ENCODE measurements at regions of chr15 and their contacts with region 1.

Region 1: GRCh38 chr15:51585986-51586385 is 36.6 kb downstream of the DMXL2 start:
- H3K4me3 Mint-ChIP-seq: peak overlapping the region; percentile 58
- H3K27ac Mint-ChIP-seq: peak overlapping the region; percentile 99
- H3K4me1 Mint-ChIP-seq: peaks cover 39% of the 10 kb centered on the region
- H3K27me3 Mint-ChIP-seq: no peaks in the 10 kb centered on the region

Region 2: DNA sequence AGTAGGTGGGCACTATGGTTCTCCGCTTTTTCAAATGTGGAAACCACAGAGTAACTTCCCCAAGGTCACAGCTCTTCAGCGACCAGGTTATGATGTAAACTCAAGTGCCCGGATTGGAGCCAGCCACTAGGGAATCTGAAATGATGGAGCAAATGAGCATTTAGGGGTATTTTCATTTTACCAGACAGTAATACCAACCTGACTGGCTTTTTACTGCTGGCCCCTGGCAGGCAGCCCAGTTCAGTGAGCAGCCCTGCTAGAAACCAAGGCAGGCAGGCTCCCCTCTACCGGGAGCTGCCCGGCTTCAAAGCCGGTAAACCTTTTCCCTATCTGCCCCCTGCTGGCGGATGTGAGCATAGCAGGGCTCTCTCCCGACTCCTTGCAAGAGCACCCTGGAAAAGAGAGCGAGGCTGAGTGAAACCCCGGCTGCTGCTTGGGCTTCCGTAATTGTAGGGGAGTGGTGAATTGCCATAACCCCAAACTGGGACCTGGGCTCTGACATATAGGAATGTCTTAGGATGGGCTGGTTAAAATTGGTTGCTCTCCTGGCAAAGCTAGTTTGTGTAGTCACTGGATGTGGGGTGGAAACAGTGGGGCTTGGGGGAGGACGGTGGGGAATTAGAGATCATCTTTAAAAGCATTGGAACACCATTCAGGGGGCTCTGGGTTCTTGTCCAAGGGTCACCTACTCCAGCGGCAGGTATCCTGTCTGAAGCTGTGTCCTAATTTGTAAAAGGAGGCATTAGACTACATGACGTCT is 393.3 kb before region 1 on chr15:
- intact Hi-C with region 1: no loop called
- H3K4me3 Mint-ChIP-seq: no peak overlapping the region
- H3K27ac Mint-ChIP-seq: no peak overlapping the region
- H3K4me1 Mint-ChIP-seq: peaks cover 46% of the 10 kb centered on the region
- H3K27me3 Mint-ChIP-seq: peaks cover 28% of the 10 kb centered on the region

Region 3: GRCh38 chr15:51536965-51537574 is 48.9 kb before region 1 on chr15:
- intact Hi-C with region 1: no loop called
- H3K4me3 Mint-ChIP-seq: no peak overlapping the region
- H3K27ac Mint-ChIP-seq: no peak overlapping the region
- H3K4me1 Mint-ChIP-seq: no peaks in the 10 kb centered on the region
- H3K27me3 Mint-ChIP-seq: no peaks in the 10 kb centered on the region

Region 4: GRCh38 chr15:51622604-51623370 is 36.8 kb after region 1 on chr15 and contains the start of gene DMXL2:
- intact Hi-C with region 1: loop called (anchors 2 kb)
- H3K4me3 Mint-ChIP-seq: peak within 1 kb of the TSS; percentile 99
- H3K27ac Mint-ChIP-seq: peak within 1 kb of the TSS; percentile 100
- H3K4me1 Mint-ChIP-seq: peaks cover 55% of the 10 kb centered on the region
- H3K27me3 Mint-ChIP-seq: no peaks in the 10 kb centered on the region

Measured in dendritic cell treated with granulocyte-macrophage colony-stimulating factor and Interleukin-4, amounts not matched to agents 40 ng/mL and 50 ng/mL, for 4 days (primary cell).